Activated naive CD4-positive, alpha-beta T cell treated with anti-CD3 and anti-CD28 coated beads for 36 hours (primary cell): ENCODE measurements at regions of chr7 and their contacts with region 1.

Region 1: GRCh38 chr7:106153891-106154449 is 41.9 kb upstream of the SYPL1 start:
- DNase-seq: peak; percentile 84
- H3K4me3 Mint-ChIP-seq: no peak overlapping the region
- H3K27ac Mint-ChIP-seq: no peak overlapping the region
- H3K4me1 Mint-ChIP-seq: peaks cover 9% of the 10 kb centered on the region
- H3K27me3 Mint-ChIP-seq: peaks cover 14% of the 10 kb centered on the region

Region 2: GRCh38 chr7:106022193-106022821 is 131.7 kb before region 1 on chr7:
- CTCF ChIA-PET with region 1: no interaction called
- intact Hi-C with region 1: no loop called
- DNase-seq: peak; percentile 82
- H3K4me3 Mint-ChIP-seq: peak overlapping the region; percentile 19
- H3K27ac Mint-ChIP-seq: peak overlapping the region; percentile 62
- H3K4me1 Mint-ChIP-seq: peaks cover 71% of the 10 kb centered on the region
- H3K27me3 Mint-ChIP-seq: no peaks in the 10 kb centered on the region

Region 3: GRCh38 chr7:106050011-106050745 is 103.8 kb before region 1 on chr7:
- CTCF ChIA-PET with region 1: interaction called, 185 read pairs
- intact Hi-C with region 1: no loop called
- DNase-seq: no peak
- H3K4me3 Mint-ChIP-seq: no peak overlapping the region
- H3K27ac Mint-ChIP-seq: no peak overlapping the region
- H3K4me1 Mint-ChIP-seq: no peaks in the 10 kb centered on the region
- H3K27me3 Mint-ChIP-seq: no peaks in the 10 kb centered on the region

Region 4: DNA sequence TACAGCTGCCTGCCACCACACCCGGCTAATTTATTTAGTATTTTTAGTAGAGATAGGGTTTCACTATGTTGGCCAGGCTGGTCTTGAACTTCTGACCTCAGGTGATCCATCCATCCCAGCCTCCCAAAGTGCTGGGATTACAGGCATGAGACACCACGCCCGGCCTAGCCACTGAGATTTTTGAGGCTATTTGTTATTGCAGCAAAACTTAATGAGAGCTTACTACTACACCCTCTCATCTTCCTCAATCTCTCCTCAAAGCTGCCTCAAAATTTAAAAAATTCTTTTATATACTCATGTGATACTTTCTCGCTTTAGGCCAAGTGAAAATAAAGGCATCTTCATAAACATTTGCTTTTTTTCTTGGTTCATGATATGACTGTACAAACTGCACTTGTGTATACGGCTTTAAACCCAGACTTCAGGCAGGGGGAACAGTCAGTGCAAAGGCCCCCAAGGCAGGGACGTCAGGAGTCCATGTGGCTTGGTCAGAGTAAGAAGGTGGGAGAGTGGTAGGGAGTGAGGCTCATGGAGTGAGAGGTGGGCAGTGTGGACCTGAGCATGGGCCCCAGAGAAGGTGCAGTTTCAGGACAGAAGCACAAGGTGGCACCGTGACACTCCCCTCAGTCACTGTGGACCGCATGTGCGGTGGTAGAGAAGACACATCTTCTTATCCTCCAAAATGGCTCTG is 97.3 kb before region 1 on chr7:
- CTCF ChIA-PET with region 1: interaction called, 185 read pairs
- intact Hi-C with region 1: loop called (anchors 1 kb)
- DNase-seq: peak; percentile 84
- H3K4me3 Mint-ChIP-seq: no peak overlapping the region
- H3K27ac Mint-ChIP-seq: no peak overlapping the region
- H3K4me1 Mint-ChIP-seq: peaks cover 16% of the 10 kb centered on the region
- H3K27me3 Mint-ChIP-seq: no peaks in the 10 kb centered on the region

Region 5: DNA sequence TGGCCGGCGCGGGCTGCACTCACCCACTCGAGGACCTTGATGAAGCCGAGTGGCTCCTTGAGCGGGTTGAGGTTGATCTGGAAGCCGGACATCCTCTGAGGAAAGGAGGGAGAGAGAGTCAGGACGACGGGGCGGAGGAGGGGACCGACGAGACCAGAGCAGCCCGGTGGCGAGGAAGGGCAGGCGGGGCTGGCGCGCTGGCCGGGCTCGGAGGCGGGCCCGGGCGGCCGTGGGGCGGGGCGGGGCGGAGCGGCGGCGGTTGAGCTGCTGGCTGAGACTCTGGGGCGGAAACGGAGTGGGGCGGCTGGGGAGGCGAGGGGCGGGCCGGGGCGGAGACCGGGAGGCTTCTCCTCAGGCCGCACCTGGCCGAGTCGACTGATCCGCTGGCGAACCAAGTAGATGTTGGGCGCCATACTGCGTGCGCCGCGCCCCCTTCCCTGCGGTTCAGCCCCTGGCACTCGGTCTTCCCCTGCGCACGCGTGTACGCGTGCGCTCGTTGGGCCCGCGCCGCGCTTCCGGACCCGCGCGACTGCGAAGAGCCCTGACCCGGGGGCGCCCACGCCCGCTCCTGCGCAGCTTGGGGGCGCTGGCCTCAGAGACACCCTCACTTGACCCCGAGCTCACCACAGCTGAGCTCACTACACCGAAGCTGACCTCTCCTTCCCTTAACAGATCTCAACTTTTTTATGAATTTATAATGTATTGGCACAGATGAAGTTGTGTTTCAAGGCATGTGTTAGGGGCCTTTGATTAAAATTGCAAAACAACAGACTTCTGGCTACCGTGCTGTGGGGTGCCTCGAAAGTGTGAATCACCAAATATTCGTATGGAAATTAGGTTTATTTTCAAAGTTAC is 41.6 kb before region 1 on chr7 and contains the start of gene SYPL1:
- CTCF ChIA-PET with region 1: interaction called, 5 read pairs
- intact Hi-C with region 1: loop called (anchors 2 kb)
- DNase-seq: peak; percentile 94
- H3K4me3 Mint-ChIP-seq: peak within 1 kb of the TSS; percentile 85
- H3K27ac Mint-ChIP-seq: peak within 1 kb of the TSS; percentile 92
- H3K4me1 Mint-ChIP-seq: peaks cover 71% of the 10 kb centered on the region
- H3K27me3 Mint-ChIP-seq: no peaks in the 10 kb centered on the region
- total RNA-seq, gene SYPL1: 24.7 to 26.6 TPM

Region 6: DNA sequence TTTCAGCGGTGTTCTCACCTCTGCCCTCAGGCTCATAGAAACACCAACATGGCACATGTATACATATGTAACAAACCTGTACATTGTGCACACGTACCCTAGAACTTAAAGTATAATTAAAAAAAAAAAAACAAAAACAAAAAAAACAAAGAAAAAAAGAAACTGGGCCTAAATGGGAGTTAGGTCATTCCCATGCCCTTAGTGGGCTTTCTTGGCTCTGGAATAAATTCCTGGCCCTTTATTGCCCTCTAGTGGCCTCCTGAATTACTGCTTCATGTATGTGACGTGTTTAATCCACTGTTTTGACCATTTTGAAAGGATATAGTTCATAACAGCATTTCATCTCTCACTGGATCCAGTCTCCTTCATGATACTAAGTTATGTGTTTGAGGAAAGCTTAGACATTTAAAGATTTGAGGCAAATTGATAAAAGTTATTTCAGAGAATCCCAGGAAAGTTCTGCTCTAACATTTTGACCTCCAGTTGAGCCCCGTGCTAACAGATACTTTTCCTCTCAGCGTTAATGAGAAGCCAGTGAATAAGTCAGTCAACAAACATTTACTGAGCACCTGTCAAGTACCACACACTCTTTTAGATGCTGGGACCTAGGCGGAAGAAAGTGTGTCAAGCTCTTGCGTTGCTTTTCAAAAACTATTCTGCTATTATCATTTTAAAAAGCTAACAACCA is 12.8 kb after region 1 on chr7:
- CTCF ChIA-PET with region 1: interaction called, 57 read pairs
- intact Hi-C with region 1: no loop called
- DNase-seq: peak; percentile 63
- H3K4me3 Mint-ChIP-seq: no peak overlapping the region
- H3K27ac Mint-ChIP-seq: no peak overlapping the region
- H3K4me1 Mint-ChIP-seq: no peaks in the 10 kb centered on the region
- H3K27me3 Mint-ChIP-seq: peaks cover 3% of the 10 kb centered on the region